K562 (cell line): ENCODE measurements at regions of chr17 and their contacts with region 1.

Region 1: GRCh38 chr17:73311781-73312641 is at the start of gene CDC42EP4:
- DNase-seq: peak; percentile 90 to 93 (median 92)
- ATAC-seq: peak; percentile 89
- H3K4me3 ChIP-seq: peak within 1 kb of the TSS; percentile 77
- H3K27ac ChIP-seq: peak within 1 kb of the TSS; percentile 77
- H3K4me1 ChIP-seq: peaks cover 22 to 53% of the 10 kb centered on the region in 2 experiments
- H3K27me3 ChIP-seq: no peaks in the 10 kb centered on the region
- CTCF ChIP-seq: no peak
- EP300 ChIP-seq: no peak; the same call in 1 of the 2 replicates
- POLR2A ChIP-seq: peak; percentile 76
- RAD21 ChIP-seq: no peak
- polyA plus RNA-seq, gene CDC42EP4: 0.65 to 1.1 TPM

Region 2: GRCh38 chr17:73068322-73069153 is 243.5 kb before region 1 on chr17:
- CTCF ChIA-PET with region 1: no interaction called
- POLR2A ChIA-PET with region 1: no interaction called
- in situ Hi-C with region 1: no loop called
- intact Hi-C with region 1: no loop called
- DNase-seq: no peak
- ATAC-seq: no peak
- H3K4me3 ChIP-seq: no peak overlapping the region
- H3K27ac ChIP-seq: no peak overlapping the region
- H3K4me1 ChIP-seq: no peaks in the 10 kb centered on the region
- H3K27me3 ChIP-seq: no peaks in the 10 kb centered on the region
- CTCF ChIP-seq: no peak
- EP300 ChIP-seq: no peak
- POLR2A ChIP-seq: no peak
- RAD21 ChIP-seq: no peak

Region 3: GRCh38 chr17:73231841-73232586 is 80.0 kb before region 1 on chr17:
- CTCF ChIA-PET with region 1: no interaction called
- POLR2A ChIA-PET with region 1: interaction called, 3 read pairs
- in situ Hi-C with region 1: no loop called
- intact Hi-C with region 1: loop called (anchors 2 kb)
- DNase-seq: peak; percentile 96
- ATAC-seq: peak; percentile 85
- H3K4me3 ChIP-seq: peak overlapping the region; percentile 95
- H3K27ac ChIP-seq: peak overlapping the region; percentile 89
- H3K4me1 ChIP-seq: peaks cover 19 to 31% of the 10 kb centered on the region in 2 experiments
- H3K27me3 ChIP-seq: no peaks in the 10 kb centered on the region
- CTCF ChIP-seq: peak; percentile 22 to 36 (median 32); a peak in 3 of 6 replicates
- EP300 ChIP-seq: no peak
- POLR2A ChIP-seq: peak; percentile 79
- RAD21 ChIP-seq: no peak; a peak in 1 of 4 replicates

Region 4: GRCh38 chr17:73255671-73256181 is 56.3 kb before region 1 on chr17:
- CTCF ChIA-PET with region 1: no interaction called
- POLR2A ChIA-PET with region 1: no interaction called
- in situ Hi-C with region 1: no loop called
- intact Hi-C with region 1: loop called (anchors 5 kb)
- DNase-seq: peak; percentile 66 to 78 (median 74)
- ATAC-seq: peak; percentile 89
- H3K4me3 ChIP-seq: no peak overlapping the region
- H3K27ac ChIP-seq: no peak overlapping the region
- H3K4me1 ChIP-seq: no peaks in the 10 kb centered on the region; a peak in 1 of 5 replicates
- H3K27me3 ChIP-seq: peaks cover 4 to 9% of the 10 kb centered on the region in 2 experiments; a peak in 4 of 5 replicates
- CTCF ChIP-seq: peak; percentile 91 to 97 (median 95)
- EP300 ChIP-seq: no peak
- POLR2A ChIP-seq: no peak
- RAD21 ChIP-seq: peak; percentile 99 to 100

Region 5: DNA sequence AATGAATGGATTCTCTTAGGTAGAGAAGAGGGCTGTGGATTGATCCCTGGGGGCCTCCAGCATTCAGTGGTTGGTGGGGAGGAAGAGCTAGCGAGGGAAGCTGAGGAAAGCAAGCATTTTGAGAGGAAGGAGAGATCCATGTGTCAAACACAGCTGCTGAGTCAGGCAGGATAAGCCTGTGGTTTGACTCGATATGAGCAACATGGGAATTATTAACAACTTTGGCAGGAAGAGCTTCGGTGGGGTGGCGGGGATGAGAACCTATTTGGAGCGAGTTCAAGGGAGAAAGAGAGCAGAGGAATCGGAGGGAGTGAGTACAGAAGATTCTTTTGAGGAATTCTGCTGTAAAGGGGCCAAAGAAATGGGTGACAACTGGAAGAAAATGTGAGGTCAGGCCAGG is 59.3 kb after region 1 on chr17:
- CTCF ChIA-PET with region 1: interaction called, 14 read pairs
- POLR2A ChIA-PET with region 1: interaction called, 3 read pairs
- in situ Hi-C with region 1: no loop called
- intact Hi-C with region 1: loop called (anchors 1 kb)
- DNase-seq: no peak
- ATAC-seq: no peak
- H3K4me3 ChIP-seq: no peak overlapping the region
- H3K27ac ChIP-seq: no peak overlapping the region
- H3K4me1 ChIP-seq: peaks cover 2 to 9% of the 10 kb centered on the region in 2 experiments; a peak in 3 of 5 replicates
- H3K27me3 ChIP-seq: peaks cover 16 to 29% of the 10 kb centered on the region in 2 experiments
- CTCF ChIP-seq: no peak
- EP300 ChIP-seq: no peak
- POLR2A ChIP-seq: no peak
- RAD21 ChIP-seq: no peak